ENCODE measurements at regions of chr6 and their contacts with region 1.

Region 1: DNA sequence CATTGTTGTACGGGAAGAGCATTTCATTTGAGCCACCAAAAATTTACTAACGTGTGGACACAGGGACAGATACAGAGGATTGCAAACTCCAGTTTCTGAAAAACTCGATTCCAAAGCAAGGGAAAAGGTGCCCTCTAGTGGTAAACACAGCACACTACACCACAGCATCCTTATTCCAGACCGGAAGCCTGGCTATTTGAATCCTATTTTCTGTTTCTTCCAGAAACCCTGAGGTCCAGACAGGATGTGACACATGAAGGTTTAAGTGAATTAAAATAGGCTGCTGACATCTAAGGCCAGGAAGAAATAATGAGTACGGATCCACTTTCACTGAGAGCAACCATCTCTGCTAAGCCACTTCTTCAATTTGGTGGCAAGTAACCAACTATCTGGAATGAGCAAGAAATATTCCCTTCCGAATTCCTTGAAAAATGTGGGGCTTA is 31.8 kb upstream of the GMPR start:
- DNase-seq: peak; percentile 56
- ATAC-seq: peak; percentile 79
- H3K4me3 Mint-ChIP-seq: no peak overlapping the region
- H3K27ac Mint-ChIP-seq: no peak overlapping the region
- H3K4me1 Mint-ChIP-seq: no peaks in the 10 kb centered on the region
- H3K27me3 Mint-ChIP-seq: peaks cover 5% of the 10 kb centered on the region
- CTCF ChIP-seq: peak; percentile 98

Region 2: DNA sequence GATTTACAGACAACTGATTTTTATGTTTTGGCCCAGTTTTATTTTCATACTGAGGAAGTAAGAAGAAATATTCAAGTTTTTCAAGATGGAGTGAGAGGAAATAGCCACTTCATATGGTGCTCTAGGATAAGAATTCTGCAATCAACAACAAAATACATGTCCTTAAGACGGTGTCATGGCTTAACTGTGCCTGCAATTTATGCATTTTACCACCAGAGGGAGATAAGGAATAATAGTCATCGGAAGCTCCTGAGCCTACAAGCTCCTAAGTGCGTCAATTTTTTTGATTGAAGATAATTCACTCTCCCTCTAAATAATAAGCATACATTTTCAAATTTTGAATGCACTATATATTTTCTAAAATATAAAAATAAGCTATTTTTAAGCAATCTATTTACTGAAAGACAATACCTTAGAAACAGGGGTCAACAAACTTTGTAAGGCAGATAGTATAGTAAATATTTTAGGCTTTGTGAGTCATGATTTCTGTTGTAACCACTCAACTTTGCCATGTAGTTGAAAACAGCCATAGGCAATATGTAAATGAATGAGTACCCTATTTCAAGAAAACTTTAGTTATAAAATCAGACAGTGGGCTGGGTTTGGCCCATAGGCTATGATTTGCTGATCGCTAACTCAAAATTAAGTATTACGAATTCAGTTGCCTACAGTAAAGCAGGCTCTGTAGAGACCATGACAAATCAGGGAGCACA is 312.9 kb before region 1 on chr6:
- CTCF ChIA-PET with region 1: interaction called, 3 read pairs
- POLR2A ChIA-PET with region 1: no interaction called
- intact Hi-C with region 1: loop called (anchors 5 kb)
- DNase-seq: no peak
- ATAC-seq: no peak
- H3K4me3 Mint-ChIP-seq: no peak overlapping the region
- H3K27ac Mint-ChIP-seq: no peak overlapping the region
- H3K4me1 Mint-ChIP-seq: no peaks in the 10 kb centered on the region
- H3K27me3 Mint-ChIP-seq: peaks cover 3% of the 10 kb centered on the region
- CTCF ChIP-seq: peak; percentile 84

Region 3: GRCh38 chr6:16216501-16217155 is 10.0 kb after region 1 on chr6:
- CTCF ChIA-PET with region 1: interaction called, 15 read pairs
- POLR2A ChIA-PET with region 1: interaction called, 4 read pairs
- intact Hi-C with region 1: no loop called
- DNase-seq: no peak
- ATAC-seq: no peak
- H3K4me3 Mint-ChIP-seq: no peak overlapping the region
- H3K27ac Mint-ChIP-seq: no peak overlapping the region
- H3K4me1 Mint-ChIP-seq: peaks cover 4% of the 10 kb centered on the region
- H3K27me3 Mint-ChIP-seq: peaks cover 38% of the 10 kb centered on the region
- CTCF ChIP-seq: no peak